ENCODE measurements at regions of chr5 and their contacts with region 1.

Region 1: DNA sequence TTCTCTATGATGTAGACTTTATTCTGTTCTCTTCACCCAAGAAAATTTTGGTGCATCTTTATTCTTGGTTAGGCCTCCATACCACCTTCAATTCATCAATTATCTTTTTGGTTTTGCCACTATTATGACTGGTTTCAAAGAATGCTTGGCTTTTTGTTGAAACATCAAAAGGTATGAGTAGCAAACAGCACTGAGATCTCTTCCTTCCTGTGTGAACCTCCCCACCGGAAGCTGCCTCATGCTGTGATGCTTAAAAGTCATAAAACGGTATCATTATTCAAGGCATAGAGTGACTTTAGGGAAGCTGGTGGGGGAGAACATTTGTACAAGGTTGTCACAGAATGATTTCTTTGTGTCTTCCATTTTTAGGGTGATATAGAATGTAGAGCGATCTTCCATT is 70.6 kb downstream of the IQGAP2 start:
- DNase-seq: no peak
- ATAC-seq: no peak
- H3K4me3 ChIP-seq: no peak overlapping the region
- H3K27ac ChIP-seq: peak overlapping the region; percentile 77
- H3K4me1 ChIP-seq: peaks cover 83% of the 10 kb centered on the region
- H3K27me3 ChIP-seq: no peaks in the 10 kb centered on the region
- CTCF ChIP-seq: no peak
- EP300 ChIP-seq: no peak
- POLR2A ChIP-seq: no peak
- RAD21 ChIP-seq: no peak

Region 2: DNA sequence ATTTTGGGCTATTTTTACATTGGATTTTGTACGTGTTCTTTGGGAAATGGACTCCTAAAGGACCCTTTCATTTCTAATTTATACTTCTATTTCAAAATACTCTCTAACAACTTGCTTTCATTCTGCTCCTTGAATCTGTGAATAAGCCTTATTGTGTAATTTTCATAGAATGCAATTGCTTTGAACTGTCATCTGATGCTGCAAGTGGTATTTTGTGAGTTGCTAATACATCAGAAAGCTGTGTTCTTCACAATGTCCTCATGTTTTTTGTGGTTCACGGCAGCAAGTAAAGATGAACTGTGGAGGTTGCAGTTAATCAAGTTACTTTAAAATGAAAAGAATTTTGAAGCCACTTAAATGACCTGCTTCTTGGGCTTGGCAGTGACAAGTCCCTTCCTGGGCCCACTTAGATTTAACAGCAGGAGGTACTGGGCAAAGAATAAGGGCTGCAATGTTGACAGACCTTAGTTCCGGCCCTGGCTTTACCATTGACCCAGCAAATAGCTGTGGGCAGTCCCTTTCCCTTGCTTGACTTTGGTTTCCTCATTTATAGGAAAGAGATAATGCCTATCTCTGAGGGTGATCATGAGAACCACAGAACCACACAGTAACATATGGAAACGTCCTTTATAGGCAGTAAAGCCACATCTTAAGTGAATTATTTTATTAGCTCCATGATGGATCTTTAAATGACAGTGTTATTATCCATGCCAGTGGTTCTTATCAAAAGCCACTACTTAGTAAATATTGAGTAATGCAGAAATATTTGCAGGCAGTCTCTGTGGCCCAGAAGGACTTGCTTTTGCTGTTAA is 15.8 kb before region 1 on chr5:
- CTCF ChIA-PET with region 1: no interaction called
- POLR2A ChIA-PET with region 1: interaction called, 3 read pairs
- in situ Hi-C with region 1: no loop called
- intact Hi-C with region 1: loop called (anchors 2 kb)
- DNase-seq: peak; percentile 79
- ATAC-seq: peak; percentile 98
- H3K4me3 ChIP-seq: peak overlapping the region in 1 of 3 experiments; percentile 1; a peak in 1 of 6 replicates
- H3K27ac ChIP-seq: peak overlapping the region; percentile 60
- H3K4me1 ChIP-seq: peaks cover 51% of the 10 kb centered on the region
- H3K27me3 ChIP-seq: no peaks in the 10 kb centered on the region; a peak in 1 of 5 replicates
- CTCF ChIP-seq: no peak
- EP300 ChIP-seq: peak in 1 of 2 experiments; percentile 29; a peak in 1 of 4 replicates
- POLR2A ChIP-seq: no peak
- RAD21 ChIP-seq: no peak

Region 3: GRCh38 chr5:76493190-76493837 is 19.7 kb after region 1 on chr5:
- CTCF ChIA-PET with region 1: no interaction called
- POLR2A ChIA-PET with region 1: no interaction called
- in situ Hi-C with region 1: no loop called
- intact Hi-C with region 1: loop called (anchors 1 kb)
- DNase-seq: peak; percentile 68
- ATAC-seq: peak; percentile 89
- H3K4me3 ChIP-seq: no peak overlapping the region
- H3K27ac ChIP-seq: peak overlapping the region; percentile 61
- H3K4me1 ChIP-seq: peaks cover 71% of the 10 kb centered on the region
- H3K27me3 ChIP-seq: no peaks in the 10 kb centered on the region
- CTCF ChIP-seq: no peak
- EP300 ChIP-seq: peak in 1 of 2 experiments; percentile 85; a peak in 2 of 4 replicates
- POLR2A ChIP-seq: no peak
- RAD21 ChIP-seq: no peak

Region 4: GRCh38 chr5:76521240-76521758 is 47.6 kb after region 1 on chr5:
- CTCF ChIA-PET with region 1: no interaction called
- POLR2A ChIA-PET with region 1: no interaction called
- in situ Hi-C with region 1: no loop called
- intact Hi-C with region 1: loop called (anchors 5 kb)
- DNase-seq: no peak
- ATAC-seq: no peak
- H3K4me3 ChIP-seq: 0 out of 6 replicates have a peak overlapping the region, but pooled peaks of 1 of the 3 experiments have one; percentile 1
- H3K27ac ChIP-seq: peak overlapping the region; percentile 59
- H3K4me1 ChIP-seq: peaks cover 39% of the 10 kb centered on the region
- H3K27me3 ChIP-seq: no peaks in the 10 kb centered on the region
- CTCF ChIP-seq: no peak
- EP300 ChIP-seq: no peak
- POLR2A ChIP-seq: no peak
- RAD21 ChIP-seq: no peak

Region 5: DNA sequence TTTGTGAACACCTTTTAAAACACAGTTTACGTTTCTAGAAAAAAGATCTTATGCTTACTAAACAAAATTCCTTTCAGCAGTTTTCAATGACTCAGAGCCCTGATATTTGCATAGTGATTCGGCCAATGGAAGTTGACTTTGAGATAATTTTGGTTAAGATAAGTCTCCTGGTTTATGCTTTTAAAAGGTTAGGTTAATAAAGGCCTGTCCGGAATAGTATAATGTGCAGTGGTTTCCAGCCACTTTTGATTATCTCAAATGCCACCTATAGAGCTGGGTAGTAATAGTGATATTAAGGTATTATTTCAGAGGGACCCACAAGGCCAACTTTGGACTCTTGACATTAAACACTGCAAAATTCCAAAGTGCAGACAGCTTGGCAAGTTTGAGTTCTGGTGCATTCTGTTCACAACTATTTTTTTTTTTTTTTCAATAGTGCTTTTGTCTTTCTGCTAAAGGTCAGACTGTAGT is 63.4 kb after region 1 on chr5:
- CTCF ChIA-PET with region 1: no interaction called
- POLR2A ChIA-PET with region 1: no interaction called
- in situ Hi-C with region 1: no loop called
- intact Hi-C with region 1: loop called (anchors 5 kb)
- DNase-seq: peak; percentile 85
- ATAC-seq: peak; percentile 77
- H3K4me3 ChIP-seq: peak overlapping the region in 2 of 3 experiments; percentile 9 to 14; a peak in 2 of 6 replicates
- H3K27ac ChIP-seq: peak overlapping the region; percentile 76
- H3K4me1 ChIP-seq: peaks cover 71% of the 10 kb centered on the region
- H3K27me3 ChIP-seq: no peaks in the 10 kb centered on the region
- CTCF ChIP-seq: no peak
- EP300 ChIP-seq: peak in 1 of 2 experiments; percentile 57; a peak in 2 of 4 replicates
- POLR2A ChIP-seq: no peak
- RAD21 ChIP-seq: no peak

Measured in HepG2 (cell line).